ENCODE measurements at regions of chr12 and their contacts with region 1.

Region 1: GRCh38 chr12:95191060-95191696 is 26.1 kb downstream of the FGD6 start:
- DNase-seq: no peak
- ATAC-seq: no peak
- H3K4me3 ChIP-seq: no peak overlapping the region
- H3K27ac ChIP-seq: no peak overlapping the region
- H3K4me1 ChIP-seq: peaks cover 2% of the 10 kb centered on the region; the same call in 1 of the 2 replicates
- H3K27me3 ChIP-seq: no peaks in the 10 kb centered on the region
- CTCF ChIP-seq: no peak
- POLR2A ChIP-seq: no peak
- RAD21 ChIP-seq: no peak

Region 2: GRCh38 chr12:95034750-95035149 is 156.4 kb before region 1 on chr12:
- CTCF ChIA-PET with region 1: no interaction called
- POLR2A ChIA-PET with region 1: no interaction called
- dilution Hi-C with region 1: no loop called
- in situ Hi-C with region 1: no loop called
- intact Hi-C with region 1: no loop called
- DNase-seq: no peak
- ATAC-seq: no peak
- H3K4me3 ChIP-seq: no peak overlapping the region
- H3K27ac ChIP-seq: no peak overlapping the region
- H3K4me1 ChIP-seq: no peaks in the 10 kb centered on the region
- H3K27me3 ChIP-seq: no peaks in the 10 kb centered on the region
- CTCF ChIP-seq: no peak
- POLR2A ChIP-seq: no peak
- RAD21 ChIP-seq: no peak

Region 3: DNA sequence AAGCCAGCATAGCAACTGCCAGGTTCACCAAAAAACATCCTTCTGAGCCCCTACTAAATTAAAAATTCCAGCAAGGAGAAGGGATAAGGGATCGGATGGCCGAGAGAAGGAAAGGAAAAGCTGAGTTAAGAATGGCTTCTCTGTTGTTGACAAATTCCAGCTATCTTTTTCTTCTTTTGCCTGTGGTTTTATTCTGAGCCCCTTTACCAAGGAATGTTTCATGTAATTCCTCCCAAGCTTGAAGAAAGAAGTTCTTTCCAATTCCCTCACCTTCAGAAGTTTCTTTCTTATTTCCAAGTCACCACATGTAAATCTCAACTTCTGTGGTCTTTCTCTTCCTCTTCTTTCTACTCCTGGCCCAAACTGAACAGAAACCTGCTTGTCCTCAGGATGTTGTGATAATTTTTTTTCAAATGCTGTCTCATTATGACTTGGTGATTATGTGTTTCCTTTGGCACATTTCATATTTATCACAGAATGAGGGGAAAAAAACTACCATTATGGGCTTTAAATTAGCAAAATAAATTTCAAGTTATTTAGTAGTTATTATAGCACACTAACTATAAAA is 13.9 kb before region 1 on chr12:
- CTCF ChIA-PET with region 1: interaction called, 5 read pairs
- POLR2A ChIA-PET with region 1: interaction called, 12 read pairs
- dilution Hi-C with region 1: no loop called
- in situ Hi-C with region 1: no loop called
- intact Hi-C with region 1: no loop called
- DNase-seq: no peak
- ATAC-seq: no peak
- H3K4me3 ChIP-seq: no peak overlapping the region
- H3K27ac ChIP-seq: no peak overlapping the region
- H3K4me1 ChIP-seq: peaks cover 4% of the 10 kb centered on the region
- H3K27me3 ChIP-seq: no peaks in the 10 kb centered on the region
- CTCF ChIP-seq: no peak
- POLR2A ChIP-seq: no peak
- RAD21 ChIP-seq: no peak

Region 4: DNA sequence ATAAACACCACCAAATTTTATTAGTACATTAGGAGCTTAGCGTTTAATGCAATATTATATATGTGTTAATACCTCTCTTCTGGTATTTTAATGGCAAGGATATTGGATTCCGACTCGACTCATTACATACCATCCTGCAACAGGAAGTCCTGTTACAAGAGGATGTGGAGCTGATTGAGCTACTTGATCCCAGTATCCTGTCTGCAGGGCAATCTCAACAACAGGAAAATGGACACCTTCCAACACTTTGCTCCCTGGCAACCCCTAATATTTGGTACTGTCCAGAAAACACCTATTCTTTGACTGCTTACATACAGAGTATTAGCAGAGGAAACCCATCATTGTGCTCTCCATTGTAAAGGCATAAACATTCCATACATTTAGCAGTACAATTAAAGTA is 71.6 kb after region 1 on chr12:
- CTCF ChIA-PET with region 1: no interaction called
- POLR2A ChIA-PET with region 1: no interaction called
- dilution Hi-C with region 1: no loop called
- in situ Hi-C with region 1: no loop called
- intact Hi-C with region 1: no loop called
- DNase-seq: peak; percentile 14
- ATAC-seq: no peak
- H3K4me3 ChIP-seq: no peak overlapping the region
- H3K27ac ChIP-seq: no peak overlapping the region
- H3K4me1 ChIP-seq: no peaks in the 10 kb centered on the region; the same call in none of the 2 replicates
- H3K27me3 ChIP-seq: no peaks in the 10 kb centered on the region
- CTCF ChIP-seq: no peak
- POLR2A ChIP-seq: no peak
- RAD21 ChIP-seq: no peak